Right ventricle myocardium superior (tissue), 1 donor: ENCODE measurements at regions of chr5 and their contacts with region 1.

Region 1: DNA sequence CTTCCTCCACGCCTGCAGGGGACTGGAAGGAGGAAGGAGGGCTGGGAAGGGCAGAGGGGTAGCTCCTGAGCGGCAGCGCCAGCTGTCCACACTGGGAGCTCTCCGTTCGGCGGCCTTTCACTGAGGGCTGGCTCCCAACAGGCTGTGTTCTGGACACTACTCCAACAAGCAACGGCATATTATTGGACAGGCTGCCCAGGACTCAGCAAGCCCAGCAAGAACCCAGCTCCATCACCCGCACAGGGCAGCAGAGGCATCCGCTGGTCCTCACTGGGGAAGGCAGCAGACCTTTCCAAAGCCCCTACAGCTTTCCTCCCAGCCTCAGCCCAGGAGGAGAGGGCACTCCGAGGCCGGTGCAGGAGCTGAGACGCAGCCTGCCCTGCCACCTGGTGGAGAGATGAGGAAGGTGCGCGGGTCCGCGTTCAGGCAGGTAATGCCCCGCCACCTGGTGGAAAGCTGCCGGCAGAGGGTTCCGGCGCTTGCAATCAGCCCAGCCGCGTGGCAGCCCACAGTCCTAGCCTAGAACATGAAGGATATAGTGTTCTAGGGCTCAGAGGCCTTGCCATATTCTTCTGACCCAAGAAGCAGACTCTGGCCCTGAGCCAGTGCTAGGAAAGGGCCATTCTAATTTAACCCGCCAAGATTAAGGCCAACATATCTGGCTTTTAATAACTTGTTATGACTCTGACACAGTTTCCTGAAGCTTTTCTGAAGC is 74.4 kb downstream of the NRG2 start:
- DNase-seq: peak; percentile 91
- ATAC-seq: peak; percentile 98

Region 2: GRCh38 chr5:139678751-139679750 is 289.7 kb before region 1 on chr5:
- intact Hi-C with region 1: no loop called
- DNase-seq: no peak
- ATAC-seq: peak; percentile 6

Region 3: DNA sequence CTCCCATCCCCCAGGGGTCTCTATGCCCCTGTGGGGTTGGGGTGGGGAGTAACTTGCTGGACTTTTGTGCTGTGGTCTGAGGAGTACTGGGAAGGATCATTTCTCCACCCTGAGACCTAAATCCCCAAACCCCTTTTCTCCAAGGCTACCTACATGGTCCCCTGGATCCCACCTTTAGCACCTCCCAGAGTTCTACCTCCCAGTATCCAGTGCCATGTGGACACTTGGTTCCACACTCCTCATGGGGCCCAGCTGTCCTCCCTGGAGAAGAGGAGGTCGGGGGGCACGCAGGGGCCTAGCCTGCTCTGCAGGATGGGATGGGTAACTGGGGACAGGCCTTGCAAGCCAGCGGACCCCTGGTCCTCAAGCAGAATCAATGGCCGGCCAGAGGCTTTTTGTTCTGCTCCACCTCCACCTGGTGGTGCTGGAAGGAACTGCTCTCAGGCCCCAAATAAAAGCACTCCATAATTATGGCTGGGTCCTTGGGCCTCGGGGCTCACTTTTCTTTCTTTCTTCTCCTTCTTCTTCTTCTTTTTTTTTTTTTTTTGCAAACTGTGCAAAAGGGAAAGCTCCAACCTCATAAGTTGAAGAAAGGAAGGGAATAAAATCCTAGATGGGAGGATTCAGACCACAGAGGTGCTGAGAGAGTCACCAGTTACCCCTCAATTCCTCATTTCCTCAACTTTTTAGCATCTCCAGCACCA is 104.7 kb before region 1 on chr5:
- intact Hi-C with region 1: loop called (anchors 5 kb)
- DNase-seq: peak; percentile 61
- ATAC-seq: peak; percentile 87